ENCODE measurements at regions of chr17 and their contacts with region 1.

Region 1: DNA sequence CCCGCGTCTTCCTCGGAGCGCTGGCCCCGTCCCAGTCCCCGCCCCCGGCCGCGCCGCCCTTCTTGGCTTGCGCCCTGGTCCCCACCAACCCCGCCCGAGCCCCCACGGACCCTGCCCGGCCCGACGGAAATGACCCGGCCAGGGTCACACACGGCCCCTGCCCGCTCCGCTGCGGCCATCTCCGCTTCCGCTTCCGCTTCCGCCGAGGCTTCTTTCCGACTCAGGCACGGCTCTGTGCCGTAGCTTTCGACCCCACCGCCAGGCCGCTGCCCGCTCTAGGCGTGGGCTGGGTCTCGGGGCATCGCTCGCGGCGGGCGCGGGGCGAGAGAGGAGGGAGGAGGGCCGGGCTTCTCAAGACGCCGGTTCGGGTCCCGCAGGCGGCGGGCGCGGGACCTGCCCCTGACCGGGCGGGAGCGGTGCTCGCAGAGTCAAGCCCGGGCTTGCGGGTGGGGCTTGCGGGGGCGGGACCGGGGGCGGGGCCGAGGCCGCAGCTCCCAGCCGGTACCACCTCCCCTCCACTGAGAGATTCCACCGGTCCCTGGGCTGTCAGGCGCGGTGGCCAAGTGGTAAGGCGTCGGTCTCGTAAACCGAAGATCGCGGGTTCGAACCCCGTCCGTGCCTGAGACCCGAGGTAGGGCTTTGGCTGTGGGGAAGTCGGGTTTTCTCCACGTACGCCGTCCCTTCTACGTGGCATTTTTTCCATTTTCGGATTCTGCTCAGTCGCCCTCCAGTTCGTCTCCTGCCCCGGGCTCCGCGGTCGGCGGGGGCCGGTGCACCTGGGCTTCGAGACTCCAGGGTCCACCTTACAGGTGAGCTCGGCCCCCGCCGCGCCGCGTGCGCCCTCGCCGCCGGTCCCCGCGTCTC is 158.3 kb downstream of the RAB11FIP4 start:
- DNase-seq: peak; percentile 93
- H3K4me3 ChIP-seq: peak overlapping the region; percentile 92
- H3K27ac ChIP-seq: peak overlapping the region; percentile 71
- H3K4me1 ChIP-seq: 0 out of 2 replicates have a peak, but pooled peaks cover 6% of the 10 kb centered on the region
- H3K27me3 ChIP-seq: no peaks in the 10 kb centered on the region

Region 2: DNA sequence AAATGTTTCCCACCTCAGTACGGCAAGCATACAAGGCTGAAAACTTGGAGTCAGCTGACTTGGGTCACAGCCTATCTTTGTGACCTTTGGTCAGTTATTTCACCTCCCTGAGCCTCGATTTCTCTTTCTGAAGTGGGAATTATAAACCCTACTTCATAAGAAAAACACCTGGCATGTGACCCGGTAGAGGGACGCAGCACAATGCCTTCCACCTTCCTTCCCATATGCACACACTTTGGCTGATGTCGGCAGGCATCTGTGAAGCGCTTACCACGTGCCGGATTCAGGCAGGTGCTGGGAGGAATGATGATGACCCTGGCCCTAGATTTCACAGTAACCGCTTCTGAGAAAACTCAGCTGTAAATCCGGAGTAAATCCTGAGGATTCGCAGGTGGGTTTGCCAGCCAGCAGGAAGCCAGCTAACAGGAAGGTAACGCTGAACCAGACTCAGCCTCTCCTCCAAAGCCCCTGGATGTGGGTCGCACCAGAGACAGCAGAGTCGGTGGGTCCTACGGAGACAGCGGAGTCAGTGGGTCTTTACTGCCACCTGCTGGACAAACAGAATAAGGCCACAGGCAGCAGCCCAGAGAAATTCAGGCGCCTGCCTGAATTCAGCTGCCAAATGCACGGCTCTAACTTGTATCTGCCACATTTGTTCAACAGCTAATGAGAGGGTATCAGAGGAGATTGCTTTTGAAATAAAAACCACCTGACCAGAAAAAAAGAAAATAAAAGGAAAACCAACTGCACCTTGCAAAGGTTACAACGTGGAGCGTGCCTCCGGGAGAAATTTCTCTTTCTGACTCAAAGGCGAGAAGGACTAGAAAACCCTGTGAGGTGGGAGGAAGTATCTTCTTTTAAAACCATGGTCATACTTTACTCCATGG is 292.7 kb after region 1 on chr17:
- in situ Hi-C with region 1: loop called (anchors 5 kb)
- DNase-seq: peak; percentile 73
- H3K4me3 ChIP-seq: peak overlapping the region; percentile 44
- H3K27ac ChIP-seq: peak overlapping the region; percentile 41
- H3K4me1 ChIP-seq: peaks cover 12% of the 10 kb centered on the region
- H3K27me3 ChIP-seq: no peaks in the 10 kb centered on the region

Measured in GM23248 (cell line).